Right lobe of liver (tissue), 6 donors: ENCODE measurements at regions of chr3 and their contacts with region 1.

Region 1: GRCh38 chr3:158859362-158859761 is 57.5 kb downstream of the MFSD1 start:
- DNase-seq: no peak
- ATAC-seq: no peak
- H3K4me3 ChIP-seq: no peak overlapping the region
- H3K27ac ChIP-seq: no peak overlapping the region
- H3K4me1 ChIP-seq: no peaks in the 10 kb centered on the region
- H3K27me3 ChIP-seq: no peaks in the 10 kb centered on the region
- CTCF ChIP-seq: no peak
- POLR2A ChIP-seq: no peak

Region 2: GRCh38 chr3:158909870-158910269 is 50.5 kb after region 1 on chr3:
- intact Hi-C with region 1: loop called in 1 of 2 experiments (anchors 10 kb)
- DNase-seq: no peak
- ATAC-seq: no peak
- H3K4me3 ChIP-seq: no peak overlapping the region
- H3K27ac ChIP-seq: no peak overlapping the region
- H3K4me1 ChIP-seq: no peaks in the 10 kb centered on the region
- H3K27me3 ChIP-seq: no peaks in the 10 kb centered on the region
- CTCF ChIP-seq: no peak
- POLR2A ChIP-seq: no peak